ENCODE measurements at regions of chr9 and their contacts with region 1.

Region 1: GRCh38 chr9:110351009-110351467 is 13.4 kb upstream of the TXNDC8 start:
- DNase-seq: no peak
- H3K4me3 ChIP-seq: no peak overlapping the region
- CTCF ChIP-seq: no peak

Region 2: DNA sequence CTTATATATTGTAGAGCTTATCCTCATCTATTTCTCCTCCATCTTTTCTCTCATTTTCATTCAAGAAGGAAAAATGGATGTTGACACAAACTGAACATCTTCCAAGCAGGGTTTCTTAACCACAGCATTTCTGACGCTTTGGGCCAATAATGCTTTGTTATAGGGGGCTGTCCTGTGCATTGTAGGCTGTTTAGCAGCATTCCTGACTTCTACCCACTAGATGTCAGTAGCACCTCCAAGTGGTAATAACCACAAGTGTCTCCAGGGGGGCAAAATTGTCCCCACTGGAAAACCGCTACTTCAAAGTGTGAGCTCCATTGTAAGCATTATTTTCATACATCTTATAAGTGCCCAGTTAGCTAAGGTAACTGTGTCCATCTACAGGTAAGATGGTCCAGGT is 10.7 kb before region 1 on chr9:
- CTCF ChIA-PET with region 1: interaction called, 12 read pairs
- POLR2A ChIA-PET with region 1: no interaction called
- DNase-seq: no peak
- H3K4me3 ChIP-seq: no peak overlapping the region
- CTCF ChIP-seq: peak; percentile 26

Measured in AG04449 (cell line).